CD4-positive, alpha-beta memory T cell (primary cell): ENCODE measurements at regions of chr5 and their contacts with region 1.

Region 1: DNA sequence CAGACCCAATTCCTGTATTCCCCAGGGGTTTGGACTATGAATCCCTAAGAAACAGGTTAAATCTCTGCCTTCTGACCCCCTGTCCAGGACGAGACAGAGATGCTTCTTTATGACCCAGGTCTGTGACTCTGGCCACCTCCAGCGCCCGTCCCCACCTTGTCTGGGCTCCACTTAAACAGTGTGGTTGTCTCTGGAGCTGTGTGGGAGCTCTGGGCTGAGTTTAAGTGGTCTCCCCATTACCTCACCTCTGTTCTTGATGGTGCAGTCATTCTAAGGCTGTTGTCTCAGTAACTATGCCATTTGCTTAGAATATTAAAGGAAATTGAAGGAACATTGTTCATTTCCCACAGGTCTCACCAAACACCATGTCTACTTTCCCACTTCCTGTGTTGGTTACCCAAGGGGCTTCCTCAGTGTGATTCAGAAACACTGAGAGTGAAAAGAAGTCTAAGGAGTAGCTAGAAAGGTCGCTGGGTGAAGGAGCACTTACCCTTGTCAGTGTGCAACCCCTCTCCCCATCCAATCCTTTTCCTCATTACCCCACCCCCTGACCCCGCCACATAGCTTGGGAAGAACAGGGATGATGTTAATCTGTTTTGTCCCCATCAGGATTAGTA is 127.8 kb upstream of the CKMT2 start:
- DNase-seq: no peak
- H3K4me3 ChIP-seq: no peak overlapping the region
- H3K4me3 Mint-ChIP-seq: peak overlapping the region in 3 of 8 donors; percentile 11 to 31 (median 26)
- H3K27ac ChIP-seq: no peak overlapping the region
- H3K27ac Mint-ChIP-seq: peak overlapping the region; percentile 24 to 72 (median 38)
- H3K4me1 ChIP-seq: peaks cover 18% of the 10 kb centered on the region
- H3K4me1 Mint-ChIP-seq: peaks cover 19 to 23% (median 21%) of the 10 kb centered on the region in 4 donors
- H3K27me3 ChIP-seq: no peaks in the 10 kb centered on the region
- H3K27me3 Mint-ChIP-seq: no peaks in the 10 kb centered on the region

Region 2: DNA sequence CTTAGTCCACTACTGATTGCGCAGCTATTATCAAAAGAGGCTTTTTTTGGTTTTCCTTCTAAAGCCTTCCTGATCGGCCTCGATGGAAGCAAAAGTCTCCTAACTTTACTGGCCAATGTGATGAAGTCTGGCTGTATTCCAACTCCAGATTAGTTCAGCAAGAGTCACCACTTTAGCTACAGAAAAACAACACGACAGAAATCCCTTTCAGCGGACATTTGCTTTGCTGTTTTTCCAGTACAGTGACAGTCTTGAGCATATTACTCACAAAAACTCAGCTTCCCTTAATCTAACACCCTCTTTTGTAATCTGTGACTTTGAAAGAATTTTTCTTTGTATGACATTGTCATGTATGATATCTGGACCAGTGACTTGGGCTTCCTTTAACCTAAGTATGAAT is 1687.1 kb before region 1 on chr5:
- CTCF ChIA-PET with region 1: no interaction called
- POLR2A ChIA-PET with region 1: no interaction called
- intact Hi-C with region 1: no loop called
- DNase-seq: no peak
- H3K4me3 ChIP-seq: no peak overlapping the region
- H3K4me3 Mint-ChIP-seq: no peak overlapping the region
- H3K27ac ChIP-seq: no peak overlapping the region
- H3K27ac Mint-ChIP-seq: no peak overlapping the region
- H3K4me1 ChIP-seq: no peaks in the 10 kb centered on the region
- H3K4me1 Mint-ChIP-seq: peaks cover 0 to 2% (median 0%) of the 10 kb centered on the region in 4 donors
- H3K27me3 ChIP-seq: no peaks in the 10 kb centered on the region
- H3K27me3 Mint-ChIP-seq: no peaks in the 10 kb centered on the region

Region 3: DNA sequence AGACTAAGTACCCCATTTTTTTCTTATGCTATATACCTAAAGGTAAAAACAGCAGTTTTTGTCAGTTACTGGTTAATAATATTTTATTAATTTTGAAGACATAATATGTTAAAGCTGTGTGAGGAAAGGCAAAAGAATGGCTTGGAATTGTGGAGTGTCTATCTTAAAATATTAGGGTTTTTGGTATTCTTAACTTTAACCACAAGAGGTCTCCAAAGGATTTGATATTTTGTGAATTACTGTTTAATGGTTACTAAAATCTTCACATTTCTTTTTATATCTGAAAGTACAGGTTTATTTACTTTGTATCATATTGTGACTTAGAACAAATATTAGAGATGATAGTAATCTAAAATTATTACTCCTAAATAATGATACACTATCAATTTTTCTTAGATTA is 418.6 kb before region 1 on chr5:
- CTCF ChIA-PET with region 1: interaction called, 44 read pairs
- POLR2A ChIA-PET with region 1: no interaction called
- intact Hi-C with region 1: loop called (anchors 1 kb)
- DNase-seq: peak in 4 of 5 donors; percentile 32 to 41 (median 37)
- H3K4me3 ChIP-seq: no peak overlapping the region
- H3K4me3 Mint-ChIP-seq: no peak overlapping the region
- H3K27ac ChIP-seq: no peak overlapping the region
- H3K27ac Mint-ChIP-seq: no peak overlapping the region
- H3K4me1 ChIP-seq: peaks cover 5% of the 10 kb centered on the region
- H3K4me1 Mint-ChIP-seq: peaks cover 13 to 28% (median 19%) of the 10 kb centered on the region in 4 donors
- H3K27me3 ChIP-seq: no peaks in the 10 kb centered on the region
- H3K27me3 Mint-ChIP-seq: no peaks in the 10 kb centered on the region

Region 4: GRCh38 chr5:80804332-80804731 is 301.0 kb before region 1 on chr5:
- CTCF ChIA-PET with region 1: interaction called, 5 read pairs
- POLR2A ChIA-PET with region 1: no interaction called
- intact Hi-C with region 1: loop called (anchors 10 kb)
- DNase-seq: no peak
- H3K4me3 ChIP-seq: no peak overlapping the region
- H3K4me3 Mint-ChIP-seq: no peak overlapping the region
- H3K27ac ChIP-seq: no peak overlapping the region
- H3K27ac Mint-ChIP-seq: no peak overlapping the region
- H3K4me1 ChIP-seq: no peaks in the 10 kb centered on the region
- H3K4me1 Mint-ChIP-seq: no peaks in the 10 kb centered on the region
- H3K27me3 ChIP-seq: no peaks in the 10 kb centered on the region
- H3K27me3 Mint-ChIP-seq: no peaks in the 10 kb centered on the region

Region 5: DNA sequence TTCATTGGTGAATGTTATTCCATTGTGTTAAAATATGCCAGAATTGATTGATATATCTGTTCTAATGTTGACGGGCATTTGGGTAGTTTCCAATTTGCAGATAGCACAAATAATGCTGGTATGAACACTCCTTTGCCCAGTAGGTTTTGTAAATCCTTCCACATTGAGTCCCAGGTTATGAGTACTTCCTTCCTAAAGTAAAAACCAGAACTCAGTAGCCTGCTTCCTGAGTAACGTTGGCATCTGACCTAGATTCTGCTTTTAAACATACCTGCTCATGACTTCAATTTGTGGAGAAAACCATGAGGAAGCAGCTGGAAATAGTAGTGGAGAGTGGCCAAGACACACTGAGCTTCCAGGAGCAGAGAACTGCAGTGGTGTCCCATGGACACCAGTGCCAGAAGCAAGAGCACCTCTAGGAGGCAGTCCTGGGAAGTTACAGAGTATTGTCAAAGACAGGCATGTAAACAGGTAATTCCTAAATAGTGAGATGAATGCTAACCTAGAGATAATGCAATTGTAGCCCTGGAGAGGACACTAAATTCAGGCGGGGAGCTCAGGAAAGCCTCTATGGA is 169.5 kb before region 1 on chr5:
- CTCF ChIA-PET with region 1: interaction called, 39 read pairs
- POLR2A ChIA-PET with region 1: no interaction called
- intact Hi-C with region 1: loop called (anchors 1 kb)
- DNase-seq: no peak
- H3K4me3 ChIP-seq: no peak overlapping the region
- H3K4me3 Mint-ChIP-seq: no peak overlapping the region
- H3K27ac ChIP-seq: no peak overlapping the region
- H3K27ac Mint-ChIP-seq: no peak overlapping the region
- H3K4me1 ChIP-seq: no peaks in the 10 kb centered on the region
- H3K4me1 Mint-ChIP-seq: peaks cover 2 to 11% (median 7%) of the 10 kb centered on the region in 4 donors
- H3K27me3 ChIP-seq: no peaks in the 10 kb centered on the region
- H3K27me3 Mint-ChIP-seq: no peaks in the 10 kb centered on the region

Region 6: GRCh38 chr5:80987078-80987766 is 118.1 kb before region 1 on chr5:
- CTCF ChIA-PET with region 1: interaction called, 10 read pairs
- POLR2A ChIA-PET with region 1: no interaction called
- intact Hi-C with region 1: no loop called
- DNase-seq: no peak
- H3K4me3 ChIP-seq: no peak overlapping the region
- H3K4me3 Mint-ChIP-seq: peak overlapping the region in 5 of 8 donors; percentile 4 to 53 (median 27)
- H3K27ac ChIP-seq: no peak overlapping the region
- H3K27ac Mint-ChIP-seq: peak overlapping the region in 3 of 7 donors; percentile 7 to 91 (median 36)
- H3K4me1 ChIP-seq: peaks cover 52% of the 10 kb centered on the region
- H3K4me1 Mint-ChIP-seq: peaks cover 41 to 79% (median 66%) of the 10 kb centered on the region in 4 donors
- H3K27me3 ChIP-seq: no peaks in the 10 kb centered on the region
- H3K27me3 Mint-ChIP-seq: no peaks in the 10 kb centered on the region

Region 7: GRCh38 chr5:81121836-81122630 is 16.7 kb after region 1 on chr5:
- CTCF ChIA-PET with region 1: interaction called, 10 read pairs
- POLR2A ChIA-PET with region 1: no interaction called
- intact Hi-C with region 1: no loop called
- DNase-seq: no peak
- H3K4me3 ChIP-seq: no peak overlapping the region
- H3K4me3 Mint-ChIP-seq: no peak overlapping the region
- H3K27ac ChIP-seq: no peak overlapping the region
- H3K27ac Mint-ChIP-seq: peak overlapping the region in 3 of 7 donors; percentile 13 to 32 (median 19)
- H3K4me1 ChIP-seq: peaks cover 4% of the 10 kb centered on the region
- H3K4me1 Mint-ChIP-seq: peaks cover 6 to 23% (median 14%) of the 10 kb centered on the region in 4 donors
- H3K27me3 ChIP-seq: no peaks in the 10 kb centered on the region
- H3K27me3 Mint-ChIP-seq: no peaks in the 10 kb centered on the region

Region 8: GRCh38 chr5:82641331-82642003 is 1536.1 kb after region 1 on chr5:
- CTCF ChIA-PET with region 1: no interaction called
- POLR2A ChIA-PET with region 1: no interaction called
- intact Hi-C with region 1: no loop called
- DNase-seq: peak in 4 of 5 donors; percentile 25 to 38 (median 28)
- H3K4me3 ChIP-seq: no peak overlapping the region
- H3K4me3 Mint-ChIP-seq: no peak overlapping the region
- H3K27ac ChIP-seq: no peak overlapping the region
- H3K27ac Mint-ChIP-seq: no peak overlapping the region
- H3K4me1 ChIP-seq: no peaks in the 10 kb centered on the region
- H3K4me1 Mint-ChIP-seq: no peaks in the 10 kb centered on the region
- H3K27me3 ChIP-seq: no peaks in the 10 kb centered on the region
- H3K27me3 Mint-ChIP-seq: peaks cover 0 to 4% of the 10 kb centered on the region in 2 donors